ENCODE measurements at regions of chr1 and their contacts with region 1.

Region 1: DNA sequence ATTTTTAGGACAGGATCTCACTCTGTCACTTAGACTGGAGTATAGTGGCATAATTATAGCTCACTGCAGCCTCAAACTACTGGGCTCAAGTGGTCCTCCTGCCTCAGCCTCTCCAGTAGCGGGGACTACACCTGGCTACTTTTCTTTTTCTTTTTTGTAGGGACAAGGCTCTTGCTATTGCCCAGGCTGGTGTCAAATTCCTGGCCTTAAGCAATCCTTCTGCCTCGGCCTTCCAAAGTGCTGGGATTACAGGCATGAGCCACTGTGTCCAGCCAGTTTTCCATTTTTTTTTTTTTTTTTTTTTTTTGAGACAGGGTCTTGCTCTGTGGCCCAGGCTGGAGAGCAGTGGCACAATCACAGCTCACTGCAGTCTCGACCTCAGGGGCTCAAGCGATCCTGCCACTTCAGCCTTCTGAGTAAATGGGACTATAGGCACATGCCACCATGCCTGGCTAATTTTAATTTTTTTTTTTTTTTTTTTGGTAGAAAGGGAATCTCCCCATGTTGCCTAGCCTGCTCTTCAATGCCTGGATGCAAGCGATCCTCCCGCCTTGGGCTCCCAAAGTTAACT is 20.6 kb upstream of the CEP85 start:
- DNase-seq: no peak
- H3K4me3 ChIP-seq: no peak overlapping the region
- H3K4me3 Mint-ChIP-seq: no peak overlapping the region
- H3K27ac ChIP-seq: no peak overlapping the region
- H3K27ac Mint-ChIP-seq: no peak overlapping the region
- H3K4me1 ChIP-seq: no peaks in the 10 kb centered on the region
- H3K4me1 Mint-ChIP-seq: no peaks in the 10 kb centered on the region
- H3K27me3 ChIP-seq: no peaks in the 10 kb centered on the region
- H3K27me3 Mint-ChIP-seq: no peaks in the 10 kb centered on the region

Region 2: DNA sequence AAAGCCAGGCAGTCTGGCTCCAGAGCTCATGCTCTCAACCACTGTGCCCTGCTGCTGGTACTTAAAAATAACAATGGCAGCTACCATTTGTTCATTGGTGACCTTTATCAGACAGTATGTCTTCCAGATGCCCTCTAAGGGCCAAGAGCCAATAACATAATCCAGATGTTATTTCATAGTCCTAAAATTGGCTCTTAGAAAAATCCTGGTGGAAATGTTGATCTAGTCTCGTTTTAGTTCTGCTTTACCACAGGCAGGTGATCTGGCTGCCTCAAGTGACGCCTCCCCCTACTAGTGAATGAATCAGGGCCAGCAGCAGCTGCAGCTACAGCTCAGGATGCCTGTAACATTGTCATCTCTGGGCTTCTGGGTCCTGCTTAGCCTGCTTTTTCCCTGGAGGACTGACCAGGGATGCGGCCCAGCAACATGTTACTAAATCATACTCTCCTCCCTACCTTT is 246.2 kb after region 1 on chr1:
- CTCF ChIA-PET with region 1: no interaction called
- POLR2A ChIA-PET with region 1: interaction called, 14 read pairs
- DNase-seq: no peak
- H3K4me3 ChIP-seq: no peak overlapping the region
- H3K4me3 Mint-ChIP-seq: no peak overlapping the region
- H3K27ac ChIP-seq: no peak overlapping the region
- H3K27ac Mint-ChIP-seq: peak overlapping the region in 2 of 8 donors; percentile 18 to 87
- H3K4me1 ChIP-seq: no peaks in the 10 kb centered on the region
- H3K4me1 Mint-ChIP-seq: no peaks in the 10 kb centered on the region
- H3K27me3 ChIP-seq: no peaks in the 10 kb centered on the region
- H3K27me3 Mint-ChIP-seq: no peaks in the 10 kb centered on the region

Measured in CD8-positive, alpha-beta memory T cell (primary cell).